Panc1 (cell line): ENCODE measurements at regions of chr20 and their contacts with region 1.

Region 1: DNA sequence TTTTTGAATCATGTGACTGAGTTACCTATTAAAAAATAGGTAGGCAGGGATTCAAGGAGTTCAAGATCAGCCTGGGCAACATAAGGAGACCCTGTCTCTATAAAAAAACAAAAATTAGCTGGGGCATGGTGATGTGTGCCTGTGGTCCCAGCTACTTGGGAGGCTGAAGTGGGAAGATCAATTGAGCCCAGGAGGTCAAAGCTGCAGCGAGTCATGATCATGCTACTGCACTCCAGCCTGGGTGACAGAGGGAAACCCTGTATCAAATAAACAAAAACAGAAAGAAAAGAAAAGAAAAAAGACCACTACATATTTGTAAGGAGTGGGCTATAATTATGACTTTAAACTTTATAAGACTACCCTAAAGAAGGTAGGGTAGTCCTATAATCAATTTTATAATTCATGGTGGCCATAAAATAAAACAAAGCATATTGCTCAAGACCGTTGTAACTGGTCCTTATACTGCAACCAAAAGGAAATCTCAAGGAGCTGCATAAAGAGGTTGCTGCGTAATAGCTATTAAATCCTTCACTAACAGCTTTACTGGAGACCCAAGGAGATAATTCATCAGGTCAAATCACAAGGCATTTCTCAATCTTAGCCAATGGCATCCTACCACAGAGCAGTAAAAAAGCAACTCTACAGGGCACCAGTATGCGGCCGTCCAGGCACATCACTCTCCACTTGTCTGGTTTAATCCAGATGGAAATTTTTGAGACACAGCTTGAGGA is 13.5 kb downstream of the PIGU start:
- DNase-seq: no peak
- ATAC-seq: 0 out of 2 replicates have a peak, but pooled peaks have one; percentile 38
- H3K4me3 ChIP-seq: no peak overlapping the region
- H3K27ac ChIP-seq: no peak overlapping the region
- H3K4me1 ChIP-seq: no peaks in the 10 kb centered on the region
- H3K27me3 ChIP-seq: no peaks in the 10 kb centered on the region
- CTCF ChIP-seq: no peak

Region 2: GRCh38 chr20:34621383-34622367 is 41.7 kb before region 1 on chr20:
- CTCF ChIA-PET with region 1: no interaction called
- POLR2A ChIA-PET with region 1: interaction called, 13 read pairs
- in situ Hi-C with region 1: no loop called
- intact Hi-C with region 1: no loop called
- DNase-seq: no peak
- ATAC-seq: no peak
- H3K4me3 ChIP-seq: no peak overlapping the region
- H3K27ac ChIP-seq: no peak overlapping the region
- H3K4me1 ChIP-seq: no peaks in the 10 kb centered on the region
- H3K27me3 ChIP-seq: no peaks in the 10 kb centered on the region
- CTCF ChIP-seq: no peak

Region 3: DNA sequence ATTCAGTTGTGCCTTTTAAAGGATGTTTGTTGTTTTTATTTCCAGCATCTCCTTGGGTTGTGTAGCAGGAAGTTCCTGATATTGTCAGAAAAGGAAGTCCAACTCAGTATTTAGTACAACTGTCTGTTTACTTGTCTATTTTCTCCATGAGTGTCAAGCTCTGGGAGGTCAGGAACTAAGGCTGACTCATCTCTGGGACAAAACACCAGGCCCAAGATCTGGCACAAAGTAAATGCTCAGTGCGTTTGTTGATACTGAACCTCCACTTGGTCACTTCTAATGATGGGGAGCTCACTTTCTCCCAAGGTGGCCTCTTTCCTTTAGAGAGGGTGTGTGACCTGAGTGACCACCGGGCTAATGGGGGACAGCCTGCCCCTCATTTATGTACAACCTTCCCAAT is 26.1 kb after region 1 on chr20:
- CTCF ChIA-PET with region 1: no interaction called
- POLR2A ChIA-PET with region 1: no interaction called
- in situ Hi-C with region 1: no loop called
- intact Hi-C with region 1: no loop called
- DNase-seq: no peak
- ATAC-seq: peak; percentile 43; the same call in 1 of the 2 replicates
- H3K4me3 ChIP-seq: no peak overlapping the region
- H3K27ac ChIP-seq: no peak overlapping the region
- H3K4me1 ChIP-seq: no peaks in the 10 kb centered on the region
- H3K27me3 ChIP-seq: no peaks in the 10 kb centered on the region
- CTCF ChIP-seq: no peak

Region 4: DNA sequence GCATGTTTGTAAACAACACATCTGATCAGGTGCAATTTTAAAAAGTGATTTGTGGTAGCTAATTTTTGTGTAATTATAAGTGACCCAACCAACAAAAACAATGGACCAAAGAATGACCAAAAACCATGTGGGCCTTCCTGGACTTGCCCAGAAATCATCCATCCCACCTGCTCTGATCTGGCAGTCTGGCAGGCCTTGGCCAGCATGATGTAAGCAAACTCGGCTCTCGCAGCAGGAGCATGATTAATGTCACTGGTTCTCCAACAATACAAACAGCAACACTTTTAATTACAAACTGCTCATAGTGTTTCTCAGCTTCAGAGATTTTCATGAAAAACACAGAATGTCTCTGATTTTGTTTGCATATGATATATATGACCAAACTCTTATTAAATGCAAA is 56.9 kb after region 1 on chr20:
- CTCF ChIA-PET with region 1: no interaction called
- POLR2A ChIA-PET with region 1: no interaction called
- in situ Hi-C with region 1: no loop called
- intact Hi-C with region 1: no loop called
- DNase-seq: no peak
- ATAC-seq: no peak
- H3K4me3 ChIP-seq: no peak overlapping the region
- H3K27ac ChIP-seq: no peak overlapping the region
- H3K4me1 ChIP-seq: no peaks in the 10 kb centered on the region
- H3K27me3 ChIP-seq: no peaks in the 10 kb centered on the region
- CTCF ChIP-seq: no peak